Breast epithelium (tissue), 4 donors: ENCODE measurements at regions of chr14 and their contacts with region 1.

Region 1: DNA sequence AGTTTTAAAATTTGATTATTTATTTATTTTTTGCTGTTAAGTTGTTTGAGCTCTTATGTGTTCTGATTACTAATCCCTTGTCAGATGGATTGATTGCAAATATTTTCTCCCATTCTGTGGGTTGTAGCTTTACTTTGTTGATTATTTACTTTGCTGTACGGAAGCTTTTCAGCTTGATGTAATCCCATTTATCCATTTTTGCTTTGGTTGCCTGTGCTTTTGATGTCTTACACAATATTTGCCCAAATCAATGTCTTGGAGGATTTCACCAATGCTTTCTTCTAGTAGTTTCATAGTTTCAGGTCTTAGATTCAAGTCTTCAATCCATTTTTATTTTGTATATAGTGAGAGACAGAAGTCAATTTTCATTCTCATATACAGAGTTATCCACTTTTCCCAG is 56.5 kb upstream of the PCNX4 start:
- DNase-seq: no peak
- H3K4me3 ChIP-seq: no peak overlapping the region
- H3K27ac ChIP-seq: no peak overlapping the region
- H3K4me1 ChIP-seq: no peaks in the 10 kb centered on the region
- H3K27me3 ChIP-seq: no peaks in the 10 kb centered on the region
- CTCF ChIP-seq: no peak
- POLR2A ChIP-seq: no peak

Region 2: GRCh38 chr14:58626431-58626831 is 1408.7 kb before region 1 on chr14:
- intact Hi-C with region 1: loop called (anchors 10 kb)
- DNase-seq: no peak
- H3K4me3 ChIP-seq: no peak overlapping the region
- H3K27ac ChIP-seq: no peak overlapping the region
- H3K4me1 ChIP-seq: no peaks in the 10 kb centered on the region
- H3K27me3 ChIP-seq: no peaks in the 10 kb centered on the region
- CTCF ChIP-seq: no peak
- POLR2A ChIP-seq: no peak

Region 3: GRCh38 chr14:60002819-60003492 is 32.2 kb before region 1 on chr14:
- intact Hi-C with region 1: no loop called
- DNase-seq: no peak
- H3K4me3 ChIP-seq: no peak overlapping the region
- H3K27ac ChIP-seq: no peak overlapping the region
- H3K4me1 ChIP-seq: no peaks in the 10 kb centered on the region
- H3K27me3 ChIP-seq: no peaks in the 10 kb centered on the region
- CTCF ChIP-seq: no peak
- POLR2A ChIP-seq: no peak